MCF 10A (cell line): ENCODE measurements at regions of chr14 and their contacts with region 1.

Region 1: GRCh38 chr14:21092273-21093011 is 6.0 kb downstream of the ZNF219 start:
- DNase-seq: peak; percentile 64
- H3K4me3 Mint-ChIP-seq: peak overlapping the region; percentile 19
- H3K27ac Mint-ChIP-seq: no peak overlapping the region
- H3K4me1 Mint-ChIP-seq: peaks cover 24% of the 10 kb centered on the region
- H3K27me3 Mint-ChIP-seq: no peaks in the 10 kb centered on the region
- CTCF ChIP-seq: peak; percentile 100

Region 2: GRCh38 chr14:21003788-21004346 is 88.6 kb before region 1 on chr14:
- CTCF ChIA-PET with region 1: interaction called, 11 read pairs
- POLR2A ChIA-PET with region 1: interaction called, 3 read pairs
- intact Hi-C with region 1: no loop called
- DNase-seq: no peak
- H3K4me3 Mint-ChIP-seq: no peak overlapping the region
- H3K27ac Mint-ChIP-seq: no peak overlapping the region
- H3K4me1 Mint-ChIP-seq: peaks cover 4% of the 10 kb centered on the region
- H3K27me3 Mint-ChIP-seq: no peaks in the 10 kb centered on the region
- CTCF ChIP-seq: no peak

Region 3: DNA sequence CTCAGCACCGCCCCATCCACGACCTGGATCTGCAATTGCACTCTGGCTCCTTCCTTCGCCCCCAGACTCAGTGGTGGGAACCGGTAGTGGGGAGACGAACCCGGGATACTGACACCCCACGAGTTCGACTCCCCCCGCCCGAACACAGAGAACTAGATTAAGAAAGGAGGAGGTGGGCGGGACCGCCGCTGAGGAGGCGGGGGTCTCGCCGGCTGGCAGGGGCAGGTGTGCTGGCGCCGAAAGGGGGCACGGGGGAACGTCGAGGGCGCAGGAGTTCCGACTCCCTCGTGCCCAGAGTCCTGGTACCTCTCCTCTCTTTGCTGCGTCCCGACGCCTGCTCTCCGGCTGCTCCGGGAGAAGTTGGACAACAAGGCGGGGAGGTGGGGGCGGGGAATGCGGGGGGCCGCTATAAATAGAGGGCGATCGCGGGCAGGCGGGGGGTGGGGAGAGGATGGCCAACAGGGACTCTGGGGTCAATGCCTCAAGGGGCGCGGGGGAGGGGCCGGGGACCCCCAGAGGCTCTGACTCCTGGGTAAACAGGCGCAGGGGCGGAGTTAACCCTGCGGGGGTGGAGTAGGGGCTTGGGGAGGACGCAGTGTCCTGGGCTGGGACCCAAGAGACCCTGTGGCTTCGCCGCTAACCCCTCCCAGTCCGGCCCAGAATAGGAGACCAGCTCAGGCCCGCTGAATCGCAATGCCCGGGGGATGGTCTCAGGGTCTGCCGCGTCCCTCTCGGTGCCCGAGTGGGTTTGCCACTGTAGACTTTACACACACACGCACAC is 66.9 kb before region 1 on chr14:
- CTCF ChIA-PET with region 1: interaction called, 34 read pairs
- POLR2A ChIA-PET with region 1: no interaction called
- intact Hi-C with region 1: no loop called
- DNase-seq: no peak
- H3K4me3 Mint-ChIP-seq: peak overlapping the region; percentile 51
- H3K27ac Mint-ChIP-seq: no peak overlapping the region
- H3K4me1 Mint-ChIP-seq: no peaks in the 10 kb centered on the region
- H3K27me3 Mint-ChIP-seq: peaks cover 20% of the 10 kb centered on the region
- CTCF ChIP-seq: no peak

Region 4: GRCh38 chr14:21049271-21049673 is 43.2 kb before region 1 on chr14:
- CTCF ChIA-PET with region 1: interaction called, 23 read pairs
- POLR2A ChIA-PET with region 1: no interaction called
- intact Hi-C with region 1: no loop called
- DNase-seq: no peak
- H3K4me3 Mint-ChIP-seq: no peak overlapping the region
- H3K27ac Mint-ChIP-seq: no peak overlapping the region
- H3K4me1 Mint-ChIP-seq: peaks cover 8% of the 10 kb centered on the region
- H3K27me3 Mint-ChIP-seq: no peaks in the 10 kb centered on the region
- CTCF ChIP-seq: no peak

Region 5: GRCh38 chr14:21109377-21110260 is 17.2 kb after region 1 on chr14:
- CTCF ChIA-PET with region 1: interaction called, 241 read pairs
- POLR2A ChIA-PET with region 1: interaction called, 37 read pairs
- intact Hi-C with region 1: loop called (anchors 1 kb)
- DNase-seq: peak; percentile 41
- H3K4me3 Mint-ChIP-seq: no peak overlapping the region
- H3K27ac Mint-ChIP-seq: no peak overlapping the region
- H3K4me1 Mint-ChIP-seq: peaks cover 27% of the 10 kb centered on the region
- H3K27me3 Mint-ChIP-seq: no peaks in the 10 kb centered on the region
- CTCF ChIP-seq: no peak

Region 6: DNA sequence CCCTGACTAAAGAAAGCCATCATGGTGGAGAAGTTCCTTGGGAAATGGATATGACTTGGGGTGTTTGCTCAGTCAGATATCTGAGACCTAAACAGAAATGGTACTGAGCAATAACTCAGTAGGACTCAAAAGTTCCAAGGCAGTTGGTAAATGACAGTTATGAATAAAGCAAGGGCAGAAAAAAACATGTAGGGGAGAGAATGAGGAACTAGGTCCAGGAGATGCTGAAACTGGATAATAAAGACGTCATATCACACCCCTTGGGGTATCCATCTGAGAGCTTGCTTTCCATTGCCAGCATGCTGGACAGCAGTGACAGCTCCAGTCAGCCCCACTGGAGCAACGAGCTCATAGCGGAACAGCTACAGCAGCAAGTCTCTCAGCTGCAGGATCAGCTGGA is 225.0 kb after region 1 on chr14:
- CTCF ChIA-PET with region 1: no interaction called
- POLR2A ChIA-PET with region 1: no interaction called
- intact Hi-C with region 1: no loop called
- DNase-seq: no peak
- H3K4me3 Mint-ChIP-seq: no peak overlapping the region
- H3K27ac Mint-ChIP-seq: no peak overlapping the region
- H3K4me1 Mint-ChIP-seq: no peaks in the 10 kb centered on the region
- H3K27me3 Mint-ChIP-seq: peaks cover 17% of the 10 kb centered on the region
- CTCF ChIP-seq: no peak

Region 7: DNA sequence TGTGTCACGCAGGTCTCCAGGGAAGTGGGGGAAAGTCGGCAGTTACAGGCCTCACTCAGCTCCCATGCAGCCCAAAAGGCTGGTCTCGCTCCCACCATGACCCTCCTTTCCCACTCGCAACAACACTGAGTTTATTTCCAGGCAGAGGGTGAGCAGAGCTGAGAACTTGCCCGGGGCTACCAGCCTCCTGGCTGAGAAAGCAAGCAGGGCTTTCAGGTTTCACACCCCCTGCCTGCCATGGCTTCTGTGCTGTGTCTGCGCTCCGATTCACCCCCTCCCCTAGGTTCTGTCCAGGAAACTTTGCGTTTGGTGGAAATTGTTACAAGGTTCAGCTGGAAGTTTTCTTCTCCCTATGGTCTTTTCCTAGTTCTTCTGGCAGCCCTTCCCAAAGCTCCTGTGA is 525.2 kb after region 1 on chr14:
- CTCF ChIA-PET with region 1: no interaction called
- POLR2A ChIA-PET with region 1: no interaction called
- intact Hi-C with region 1: no loop called
- DNase-seq: no peak
- H3K4me3 Mint-ChIP-seq: no peak overlapping the region
- H3K27ac Mint-ChIP-seq: no peak overlapping the region
- H3K4me1 Mint-ChIP-seq: no peaks in the 10 kb centered on the region
- H3K27me3 Mint-ChIP-seq: peaks cover 31% of the 10 kb centered on the region
- CTCF ChIP-seq: no peak